ENCODE measurements at regions of chr3 and their contacts with region 1.

Region 1: GRCh38 chr3:58161435-58162398 is 49.1 kb downstream of the DNASE1L3 start:
- DNase-seq: peak; percentile 91
- H3K4me3 ChIP-seq: no peak overlapping the region
- H3K27ac ChIP-seq: peak overlapping the region; percentile 65 to 92 (median 82)
- H3K4me1 ChIP-seq: peaks cover 0 to 83% (median 71%) of the 10 kb centered on the region in 4 donors
- H3K27me3 ChIP-seq: no peaks in the 10 kb centered on the region
- CTCF ChIP-seq: no peak
- EP300 ChIP-seq: no peak
- POLR2A ChIP-seq: no peak

Region 2: GRCh38 chr3:58059349-58060321 is 102.1 kb before region 1 on chr3:
- intact Hi-C with region 1: loop called (anchors 5 kb)
- DNase-seq: peak; percentile 91
- H3K4me3 ChIP-seq: peak overlapping the region in 1 of 4 donors; percentile 0
- H3K27ac ChIP-seq: peak overlapping the region; percentile 81 to 93 (median 82)
- H3K4me1 ChIP-seq: peaks cover 0 to 91% (median 75%) of the 10 kb centered on the region in 4 donors
- H3K27me3 ChIP-seq: no peaks in the 10 kb centered on the region
- CTCF ChIP-seq: no peak
- EP300 ChIP-seq: peak in 3 of 4 donors; percentile 81 to 95 (median 93)
- POLR2A ChIP-seq: peak in 1 of 2 donors; percentile 75

Region 3: DNA sequence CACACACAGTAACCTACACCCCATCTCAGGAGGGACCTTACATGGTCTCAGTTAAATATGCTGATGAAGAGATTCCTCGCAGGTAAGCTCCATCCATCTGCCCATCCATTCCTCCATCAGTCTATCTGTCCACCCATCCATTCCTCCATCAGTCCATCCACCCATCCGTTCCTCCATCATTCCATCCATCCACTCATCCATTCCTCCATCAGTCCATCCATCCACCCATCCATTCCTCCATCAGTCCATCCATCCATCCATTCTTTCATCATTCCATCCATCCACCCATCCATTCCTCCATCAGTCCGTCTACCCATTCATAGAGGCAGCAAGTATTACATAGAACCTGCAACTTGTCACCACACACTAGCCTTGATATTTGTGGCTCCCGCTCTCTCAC is 28.9 kb before region 1 on chr3:
- intact Hi-C with region 1: loop called (anchors 2 kb)
- DNase-seq: no peak
- H3K4me3 ChIP-seq: no peak overlapping the region
- H3K27ac ChIP-seq: peak overlapping the region in 1 of 4 donors; percentile 2
- H3K4me1 ChIP-seq: peaks cover 0 to 41% (median 19%) of the 10 kb centered on the region in 4 donors
- H3K27me3 ChIP-seq: no peaks in the 10 kb centered on the region
- CTCF ChIP-seq: no peak
- EP300 ChIP-seq: no peak
- POLR2A ChIP-seq: no peak

Measured in sigmoid colon (tissue), 7 donors.